Mammary epithelial cell (primary cell): ENCODE measurements at regions of chr20 and their contacts with region 1.

Region 1: GRCh38 chr20:15265581-15266309 is 928.3 kb upstream of the FLRT3 start:
- DNase-seq: no peak
- H3K4me3 ChIP-seq: no peak overlapping the region
- H3K27ac ChIP-seq: no peak overlapping the region
- H3K4me1 ChIP-seq: no peaks in the 10 kb centered on the region
- H3K27me3 ChIP-seq: no peaks in the 10 kb centered on the region
- CTCF ChIP-seq: peak in 1 of 2 donors; percentile 11

Region 2: GRCh38 chr20:15310361-15310760 is 44.6 kb after region 1 on chr20:
- CTCF ChIA-PET with region 1: no interaction called
- dilution Hi-C with region 1: no loop called
- in situ Hi-C with region 1: no loop called
- intact Hi-C with region 1: loop called (anchors 2 kb)
- DNase-seq: peak; percentile 10
- H3K4me3 ChIP-seq: no peak overlapping the region
- H3K27ac ChIP-seq: no peak overlapping the region
- H3K4me1 ChIP-seq: peaks cover 6% of the 10 kb centered on the region
- H3K27me3 ChIP-seq: no peaks in the 10 kb centered on the region
- CTCF ChIP-seq: no peak

Region 3: GRCh38 chr20:15654208-15654645 is 388.5 kb after region 1 on chr20:
- CTCF ChIA-PET with region 1: no interaction called
- dilution Hi-C with region 1: no loop called
- in situ Hi-C with region 1: no loop called
- intact Hi-C with region 1: loop called (anchors 10 kb)
- DNase-seq: peak; percentile 55
- H3K4me3 ChIP-seq: no peak overlapping the region
- H3K27ac ChIP-seq: no peak overlapping the region
- H3K4me1 ChIP-seq: no peaks in the 10 kb centered on the region
- H3K27me3 ChIP-seq: no peaks in the 10 kb centered on the region
- CTCF ChIP-seq: peak; percentile 67 to 75